ENCODE measurements at regions of chr4 and their contacts with region 1.

Region 1: GRCh38 chr4:6640292-6641163 is at the start of gene MRFAP1:
- DNase-seq: peak; percentile 98
- H3K4me3 Mint-ChIP-seq: peak within 1 kb of the TSS; percentile 94
- H3K27ac Mint-ChIP-seq: peak within 1 kb of the TSS; percentile 94
- H3K4me1 Mint-ChIP-seq: peaks cover 20% of the 10 kb centered on the region
- H3K27me3 Mint-ChIP-seq: no peaks in the 10 kb centered on the region
- total RNA-seq, gene MRFAP1: 122 TPM in 2 replicates

Region 2: GRCh38 chr4:5956285-5957021 is 684.1 kb before region 1 on chr4:
- intact Hi-C with region 1: no loop called
- DNase-seq: no peak
- H3K4me3 Mint-ChIP-seq: no peak overlapping the region
- H3K27ac Mint-ChIP-seq: no peak overlapping the region
- H3K4me1 Mint-ChIP-seq: peaks cover 7% of the 10 kb centered on the region
- H3K27me3 Mint-ChIP-seq: peaks cover 6% of the 10 kb centered on the region

Region 3: GRCh38 chr4:6180841-6181631 is 459.5 kb before region 1 on chr4:
- intact Hi-C with region 1: loop called (anchors 5 kb)
- DNase-seq: peak; percentile 90
- H3K4me3 Mint-ChIP-seq: peak overlapping the region; percentile 69
- H3K27ac Mint-ChIP-seq: peak overlapping the region; percentile 92
- H3K4me1 Mint-ChIP-seq: peaks cover 73% of the 10 kb centered on the region
- H3K27me3 Mint-ChIP-seq: no peaks in the 10 kb centered on the region

Region 4: GRCh38 chr4:6658597-6659075 is 18.1 kb after region 1 on chr4:
- intact Hi-C with region 1: no loop called
- DNase-seq: peak; percentile 85
- H3K4me3 Mint-ChIP-seq: peak overlapping the region; percentile 74
- H3K27ac Mint-ChIP-seq: no peak overlapping the region
- H3K4me1 Mint-ChIP-seq: peaks cover 13% of the 10 kb centered on the region
- H3K27me3 Mint-ChIP-seq: peaks cover 35% of the 10 kb centered on the region

Region 5: GRCh38 chr4:6673660-6674499 is 33.4 kb after region 1 on chr4:
- intact Hi-C with region 1: loop called (anchors 1 kb)
- DNase-seq: peak; percentile 98
- H3K4me3 Mint-ChIP-seq: peak overlapping the region; percentile 95
- H3K27ac Mint-ChIP-seq: peak overlapping the region; percentile 100
- H3K4me1 Mint-ChIP-seq: peaks cover 46% of the 10 kb centered on the region
- H3K27me3 Mint-ChIP-seq: no peaks in the 10 kb centered on the region

Region 6: GRCh38 chr4:6716018-6716911 is 75.7 kb after region 1 on chr4 and contains the start of gene BLOC1S4:
- intact Hi-C with region 1: loop called (anchors 1 kb)
- DNase-seq: peak; percentile 97
- H3K4me3 Mint-ChIP-seq: peak within 1 kb of the TSS; percentile 98
- H3K27ac Mint-ChIP-seq: peak within 1 kb of the TSS; percentile 99
- H3K4me1 Mint-ChIP-seq: peaks cover 23% of the 10 kb centered on the region
- H3K27me3 Mint-ChIP-seq: peaks cover 3% of the 10 kb centered on the region
- total RNA-seq, gene BLOC1S4: 20.1 and 21.4 TPM in 2 replicates

Region 7: DNA sequence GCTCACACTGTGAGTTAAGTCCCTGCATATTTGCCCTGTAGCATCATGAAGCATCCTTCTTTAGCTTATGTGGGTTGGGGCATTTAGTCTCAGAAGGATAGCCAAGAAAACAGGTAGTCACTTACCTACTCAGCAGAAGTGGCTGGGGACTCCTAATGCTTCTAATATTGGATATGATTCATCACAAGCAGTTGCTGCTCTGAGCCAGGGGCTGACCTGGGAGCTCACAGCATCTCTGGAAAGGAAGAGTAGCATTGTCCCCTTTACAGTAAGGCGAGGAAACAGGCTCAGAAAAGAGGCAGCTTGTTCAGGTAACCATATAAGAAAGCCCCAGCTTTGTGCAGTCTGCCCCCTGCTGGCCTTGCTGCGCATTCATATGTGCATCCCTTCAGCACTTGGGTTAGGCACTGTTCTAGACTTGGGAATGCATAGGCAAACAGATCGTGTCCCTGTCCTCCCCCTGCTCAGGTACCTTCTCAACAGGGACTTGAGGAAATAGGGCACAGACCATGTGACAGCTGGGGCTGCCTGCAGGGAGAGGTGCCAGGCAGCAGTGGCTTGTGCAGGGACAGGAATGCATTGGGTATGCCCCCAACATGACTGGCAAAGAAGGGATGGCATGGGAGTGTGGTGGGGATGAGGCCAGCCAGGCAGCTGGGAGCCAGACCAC is 233.4 kb after region 1 on chr4:
- intact Hi-C with region 1: loop called (anchors 1 kb)
- DNase-seq: peak; percentile 93
- H3K4me3 Mint-ChIP-seq: no peak overlapping the region
- H3K27ac Mint-ChIP-seq: no peak overlapping the region
- H3K4me1 Mint-ChIP-seq: peaks cover 4% of the 10 kb centered on the region
- H3K27me3 Mint-ChIP-seq: no peaks in the 10 kb centered on the region